ENCODE measurements at regions of chr9 and their contacts with region 1.

Region 1: DNA sequence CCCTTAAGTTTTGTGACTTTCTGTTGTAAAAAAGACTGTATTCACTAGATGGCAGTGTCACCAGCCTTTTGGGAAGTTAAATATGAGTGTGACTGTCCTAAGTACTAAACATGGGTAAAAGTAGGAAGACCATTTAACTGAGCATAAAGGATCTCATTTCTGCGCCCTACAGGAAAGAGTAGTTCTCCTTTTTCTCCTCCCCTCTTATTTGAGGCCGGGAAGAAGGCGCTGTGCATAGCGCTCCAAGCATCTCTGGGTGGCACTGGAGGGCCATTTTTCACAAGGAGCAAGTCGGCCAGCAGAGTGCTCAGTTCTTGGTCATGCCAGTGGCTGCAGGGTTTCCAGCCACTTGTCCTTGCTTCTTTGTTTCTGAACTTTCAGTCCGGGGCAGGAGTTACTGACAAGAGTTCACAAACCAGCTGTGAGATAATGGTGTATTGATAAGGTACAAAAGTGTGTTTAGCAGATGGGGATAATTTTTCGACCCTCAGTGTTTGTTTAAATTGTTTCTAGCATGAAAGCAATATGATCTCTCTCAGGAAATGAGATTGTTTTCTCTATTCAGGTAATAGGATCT is 227.6 kb upstream of the DMRT1 start:
- DNase-seq: peak; percentile 66 to 79 (median 76)
- H3K4me3 ChIP-seq: no peak overlapping the region
- H3K27ac ChIP-seq: peak overlapping the region in 1 of 2 donors; percentile 26
- H3K4me1 ChIP-seq: peaks cover 5% of the 10 kb centered on the region
- H3K27me3 ChIP-seq: no peaks in the 10 kb centered on the region
- CTCF ChIP-seq: peak; percentile 77 to 86 (median 80)
- EP300 ChIP-seq: no peak
- POLR2A ChIP-seq: no peak

Region 2: GRCh38 chr9:385818-386398 is 228.0 kb before region 1 on chr9:
- intact Hi-C with region 1: loop called in 1 of 4 experiments (anchors 10 kb)
- DNase-seq: peak; percentile 12 to 60 (median 30)
- H3K4me3 ChIP-seq: no peak overlapping the region
- H3K27ac ChIP-seq: no peak overlapping the region
- H3K4me1 ChIP-seq: no peaks in the 10 kb centered on the region
- H3K27me3 ChIP-seq: no peaks in the 10 kb centered on the region
- CTCF ChIP-seq: peak in 2 of 3 donors; percentile 68 to 81
- EP300 ChIP-seq: no peak
- POLR2A ChIP-seq: no peak

Region 3: GRCh38 chr9:503881-504852 is 109.7 kb before region 1 on chr9:
- intact Hi-C with region 1: no loop called
- DNase-seq: peak; percentile 65 to 84 (median 74)
- H3K4me3 ChIP-seq: peak within 1 kb of the TSS; percentile 49
- H3K27ac ChIP-seq: peak within 1 kb of the TSS; percentile 44 to 65
- H3K4me1 ChIP-seq: peaks cover 5% of the 10 kb centered on the region
- H3K27me3 ChIP-seq: no peaks in the 10 kb centered on the region
- CTCF ChIP-seq: peak in 2 of 3 donors; percentile 32 to 40
- EP300 ChIP-seq: no peak
- POLR2A ChIP-seq: no peak

Region 4: DNA sequence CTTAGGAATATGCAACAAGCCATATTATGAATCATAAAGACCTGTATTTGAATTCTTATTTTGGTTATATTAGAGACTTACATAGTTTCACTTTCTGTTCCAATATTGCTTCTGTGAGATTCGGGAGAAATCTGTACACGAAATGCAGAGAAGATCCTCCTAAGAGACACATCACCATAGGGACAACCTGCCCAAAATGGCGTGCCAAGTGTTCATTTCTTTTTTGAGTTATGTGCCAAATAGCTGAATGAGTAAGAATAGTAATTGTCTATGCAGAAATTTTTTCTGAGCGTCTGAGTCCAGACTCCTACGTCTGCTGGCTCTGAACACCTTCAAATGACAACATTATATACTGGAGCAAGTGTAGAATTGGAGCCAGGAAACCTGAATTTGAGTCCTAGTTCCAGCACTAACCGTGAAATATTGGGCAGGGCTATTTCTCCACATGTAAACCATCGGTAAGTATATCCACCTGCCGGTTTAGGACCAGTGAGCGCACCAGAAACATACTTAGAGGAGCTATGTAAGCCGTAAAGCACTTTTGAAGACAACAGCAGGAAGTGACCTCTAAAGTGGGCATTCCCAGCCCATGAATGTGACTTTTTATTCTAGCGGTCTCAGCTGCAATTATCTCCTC is 63.7 kb after region 1 on chr9:
- intact Hi-C with region 1: loop called in 1 of 4 experiments (anchors 10 kb)
- DNase-seq: no peak
- H3K4me3 ChIP-seq: peak overlapping the region; percentile 35
- H3K27ac ChIP-seq: peak overlapping the region in 1 of 2 donors; percentile 43
- H3K4me1 ChIP-seq: no peaks in the 10 kb centered on the region
- H3K27me3 ChIP-seq: no peaks in the 10 kb centered on the region
- CTCF ChIP-seq: no peak
- EP300 ChIP-seq: no peak
- POLR2A ChIP-seq: no peak

Region 5: DNA sequence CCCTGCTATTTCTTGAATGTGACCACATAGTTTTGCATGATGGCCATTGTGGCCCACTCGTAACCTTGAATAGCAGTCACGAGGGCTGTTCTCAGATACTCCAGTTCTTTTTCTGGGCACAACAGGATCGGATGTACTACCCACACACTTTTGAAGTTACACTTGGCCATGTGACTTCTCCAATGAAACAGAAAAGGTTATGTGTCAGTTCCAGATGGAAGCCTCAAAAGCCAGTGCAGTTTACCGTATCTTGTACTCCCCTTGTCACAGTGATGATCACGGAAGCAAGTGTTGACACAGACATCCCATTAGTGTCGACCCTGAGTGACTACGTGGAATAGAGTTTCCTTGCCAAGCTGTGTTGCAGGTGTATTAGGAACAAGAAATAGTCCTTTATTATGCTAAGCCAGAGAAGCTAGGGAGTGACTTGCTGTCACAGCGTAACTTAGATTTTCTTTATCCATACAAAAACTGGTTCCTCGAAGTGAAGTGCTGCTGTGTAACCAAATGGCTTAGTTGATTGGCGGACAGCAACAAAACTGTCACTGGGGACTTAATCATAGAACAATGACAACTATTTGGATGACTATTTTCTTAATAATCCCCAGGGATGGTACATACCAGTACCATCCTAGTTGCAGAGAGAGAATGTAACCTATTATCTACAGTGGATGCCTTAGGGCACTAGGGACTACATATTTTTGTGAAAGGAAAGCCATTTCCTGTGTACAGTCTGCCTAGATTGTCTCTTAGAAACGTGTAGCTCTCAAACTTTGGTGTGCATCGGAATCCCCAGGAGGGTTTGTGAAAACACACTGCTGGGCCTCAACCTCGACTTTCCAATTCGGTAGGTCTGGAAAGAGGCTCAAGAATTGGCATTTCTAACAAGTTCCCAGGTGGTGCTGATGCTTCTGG is 137.5 kb after region 1 on chr9:
- intact Hi-C with region 1: loop called in 1 of 4 experiments (anchors 5 kb)
- DNase-seq: no peak
- H3K4me3 ChIP-seq: no peak overlapping the region
- H3K27ac ChIP-seq: no peak overlapping the region
- H3K4me1 ChIP-seq: no peaks in the 10 kb centered on the region
- H3K27me3 ChIP-seq: no peaks in the 10 kb centered on the region
- CTCF ChIP-seq: no peak
- EP300 ChIP-seq: no peak
- POLR2A ChIP-seq: no peak

Region 6: GRCh38 chr9:763692-764524 is 150.0 kb after region 1 on chr9:
- intact Hi-C with region 1: loop called (anchors 2 to 5 kb)
- DNase-seq: peak; percentile 51 to 71 (median 55)
- H3K4me3 ChIP-seq: peak overlapping the region; percentile 14
- H3K27ac ChIP-seq: no peak overlapping the region
- H3K4me1 ChIP-seq: no peaks in the 10 kb centered on the region
- H3K27me3 ChIP-seq: no peaks in the 10 kb centered on the region
- CTCF ChIP-seq: peak; percentile 65 to 89 (median 86)
- EP300 ChIP-seq: no peak
- POLR2A ChIP-seq: no peak